ENCODE measurements at regions of chr16 and their contacts with region 1.

Region 1: DNA sequence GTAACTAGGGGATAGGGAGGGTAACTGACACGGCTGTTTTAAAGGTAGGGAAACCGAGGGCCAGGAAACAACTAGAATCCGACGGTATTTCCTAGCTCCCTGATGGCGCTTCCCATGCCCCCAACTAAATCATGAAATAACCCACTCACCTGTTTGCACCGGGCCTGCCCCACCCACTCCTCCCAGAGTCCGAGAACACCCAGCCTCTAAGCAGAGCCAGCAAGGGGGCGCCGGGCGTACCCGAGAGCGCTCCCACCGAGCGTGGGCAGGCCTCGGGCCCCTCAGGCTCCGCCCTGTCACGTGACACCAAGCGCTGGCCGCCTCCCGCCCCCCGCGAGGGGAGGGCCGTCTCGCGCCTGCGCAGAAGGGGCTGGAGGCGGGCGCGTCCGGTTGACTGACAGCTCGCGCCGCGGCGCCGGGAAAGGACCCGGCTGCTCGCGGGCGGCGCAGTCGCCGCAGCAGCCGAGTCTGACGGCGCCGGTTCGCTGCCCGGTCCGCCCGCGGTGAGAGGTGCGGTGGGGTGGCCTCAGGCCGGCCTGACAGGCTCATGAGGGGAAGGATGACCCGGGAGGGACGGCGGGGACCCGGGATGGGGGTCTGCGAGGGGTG is at the start of gene KIAA0513:
- DNase-seq: peak; percentile 96 to 98 (median 97)
- H3K4me3 ChIP-seq: peak within 1 kb of the TSS; percentile 57
- H3K4me3 Mint-ChIP-seq: peak within 1 kb of the TSS; percentile 92 to 98 (median 95)
- H3K27ac ChIP-seq: peak within 1 kb of the TSS; percentile 72
- H3K27ac Mint-ChIP-seq: peak within 1 kb of the TSS; percentile 85 to 99 (median 96)
- H3K4me1 ChIP-seq: peaks cover 27% of the 10 kb centered on the region
- H3K4me1 Mint-ChIP-seq: peaks cover 27 to 46% (median 36%) of the 10 kb centered on the region in 3 donors
- H3K27me3 ChIP-seq: no peaks in the 10 kb centered on the region
- H3K27me3 Mint-ChIP-seq: no peaks in the 10 kb centered on the region
- total RNA-seq, gene KIAA0513: 13.2 to 13.5 TPM

Region 2: GRCh38 chr16:85010931-85011845 is 16.3 kb before region 1 on chr16 and contains the start of gene ZDHHC7:
- CTCF ChIA-PET with region 1: interaction called, 24 read pairs
- POLR2A ChIA-PET with region 1: interaction called, 27 read pairs
- DNase-seq: peak; percentile 80 to 90 (median 85)
- H3K4me3 ChIP-seq: peak within 1 kb of the TSS; percentile 81
- H3K4me3 Mint-ChIP-seq: peak within 1 kb of the TSS; percentile 98 to 99 (median 99)
- H3K27ac ChIP-seq: peak within 1 kb of the TSS; percentile 97
- H3K27ac Mint-ChIP-seq: peak within 1 kb of the TSS; percentile 96 to 100 (median 100)
- H3K4me1 ChIP-seq: peaks cover 28% of the 10 kb centered on the region
- H3K4me1 Mint-ChIP-seq: peaks cover 35 to 51% (median 50%) of the 10 kb centered on the region in 3 donors
- H3K27me3 ChIP-seq: no peaks in the 10 kb centered on the region
- H3K27me3 Mint-ChIP-seq: peaks cover 0 to 7% of the 10 kb centered on the region in 2 donors
- total RNA-seq, gene ZDHHC7: 31.6 to 32.6 TPM

Region 3: GRCh38 chr16:85055503-85056210 is 28.2 kb after region 1 on chr16:
- CTCF ChIA-PET with region 1: interaction called, 9 read pairs
- POLR2A ChIA-PET with region 1: interaction called, 10 read pairs
- DNase-seq: peak; percentile 67 to 91 (median 74)
- H3K4me3 ChIP-seq: peak overlapping the region; percentile 50
- H3K4me3 Mint-ChIP-seq: peak overlapping the region; percentile 33 to 73 (median 67)
- H3K27ac ChIP-seq: peak overlapping the region; percentile 62
- H3K27ac Mint-ChIP-seq: peak overlapping the region; percentile 81 to 97 (median 86)
- H3K4me1 ChIP-seq: peaks cover 39% of the 10 kb centered on the region
- H3K4me1 Mint-ChIP-seq: peaks cover 37 to 51% (median 41%) of the 10 kb centered on the region in 3 donors
- H3K27me3 ChIP-seq: no peaks in the 10 kb centered on the region
- H3K27me3 Mint-ChIP-seq: no peaks in the 10 kb centered on the region

Measured in CD8-positive, alpha-beta memory T cell (primary cell).